ENCODE measurements at regions of chr12 and their contacts with region 1.

Region 1: GRCh38 chr12:40375076-40375475 is 150.3 kb downstream of the LRRK2 start:
- DNase-seq: no peak
- ATAC-seq: peak; percentile 91
- H3K4me3 ChIP-seq: no peak overlapping the region
- H3K27ac ChIP-seq: no peak overlapping the region
- H3K4me1 ChIP-seq: no peaks in the 10 kb centered on the region
- H3K27me3 ChIP-seq: no peaks in the 10 kb centered on the region
- CTCF ChIP-seq: peak; percentile 30 to 46 (median 45); a peak in 5 of 6 replicates
- EP300 ChIP-seq: no peak
- POLR2A ChIP-seq: no peak
- RAD21 ChIP-seq: no peak

Region 2: GRCh38 chr12:39736406-39736805 is 638.7 kb before region 1 on chr12:
- CTCF ChIA-PET with region 1: no interaction called
- POLR2A ChIA-PET with region 1: no interaction called
- RAD21 ChIA-PET with region 1: no interaction called
- SMC1A ChIA-PET with region 1: no interaction called
- in situ Hi-C with region 1: no loop called
- intact Hi-C with region 1: no loop called
- DNase-seq: no peak
- ATAC-seq: no peak
- H3K4me3 ChIP-seq: no peak overlapping the region
- H3K27ac ChIP-seq: no peak overlapping the region
- H3K4me1 ChIP-seq: no peaks in the 10 kb centered on the region
- H3K27me3 ChIP-seq: no peaks in the 10 kb centered on the region
- CTCF ChIP-seq: no peak
- EP300 ChIP-seq: no peak
- POLR2A ChIP-seq: no peak
- RAD21 ChIP-seq: no peak

Region 3: GRCh38 chr12:40152783-40153383 is 222.2 kb before region 1 on chr12:
- CTCF ChIA-PET with region 1: interaction called, 4 read pairs
- POLR2A ChIA-PET with region 1: no interaction called
- RAD21 ChIA-PET with region 1: interaction called, 4 read pairs
- SMC1A ChIA-PET with region 1: interaction called, 6 read pairs
- in situ Hi-C with region 1: no loop called
- intact Hi-C with region 1: loop called (anchors 5 kb)
- DNase-seq: no peak
- ATAC-seq: peak; percentile 78
- H3K4me3 ChIP-seq: no peak overlapping the region
- H3K27ac ChIP-seq: no peak overlapping the region
- H3K4me1 ChIP-seq: no peaks in the 10 kb centered on the region
- H3K27me3 ChIP-seq: no peaks in the 10 kb centered on the region
- CTCF ChIP-seq: peak; percentile 50 to 69 (median 66); a peak in 5 of 6 replicates
- EP300 ChIP-seq: no peak
- POLR2A ChIP-seq: no peak
- RAD21 ChIP-seq: peak; percentile 84

Region 4: GRCh38 chr12:40271981-40272664 is 103.0 kb before region 1 on chr12:
- CTCF ChIA-PET with region 1: no interaction called
- POLR2A ChIA-PET with region 1: no interaction called
- RAD21 ChIA-PET with region 1: no interaction called
- SMC1A ChIA-PET with region 1: no interaction called
- in situ Hi-C with region 1: no loop called
- intact Hi-C with region 1: no loop called
- DNase-seq: no peak
- ATAC-seq: no peak
- H3K4me3 ChIP-seq: no peak overlapping the region
- H3K27ac ChIP-seq: no peak overlapping the region
- H3K4me1 ChIP-seq: no peaks in the 10 kb centered on the region
- H3K27me3 ChIP-seq: no peaks in the 10 kb centered on the region
- CTCF ChIP-seq: no peak
- EP300 ChIP-seq: no peak
- POLR2A ChIP-seq: no peak
- RAD21 ChIP-seq: no peak

Region 5: DNA sequence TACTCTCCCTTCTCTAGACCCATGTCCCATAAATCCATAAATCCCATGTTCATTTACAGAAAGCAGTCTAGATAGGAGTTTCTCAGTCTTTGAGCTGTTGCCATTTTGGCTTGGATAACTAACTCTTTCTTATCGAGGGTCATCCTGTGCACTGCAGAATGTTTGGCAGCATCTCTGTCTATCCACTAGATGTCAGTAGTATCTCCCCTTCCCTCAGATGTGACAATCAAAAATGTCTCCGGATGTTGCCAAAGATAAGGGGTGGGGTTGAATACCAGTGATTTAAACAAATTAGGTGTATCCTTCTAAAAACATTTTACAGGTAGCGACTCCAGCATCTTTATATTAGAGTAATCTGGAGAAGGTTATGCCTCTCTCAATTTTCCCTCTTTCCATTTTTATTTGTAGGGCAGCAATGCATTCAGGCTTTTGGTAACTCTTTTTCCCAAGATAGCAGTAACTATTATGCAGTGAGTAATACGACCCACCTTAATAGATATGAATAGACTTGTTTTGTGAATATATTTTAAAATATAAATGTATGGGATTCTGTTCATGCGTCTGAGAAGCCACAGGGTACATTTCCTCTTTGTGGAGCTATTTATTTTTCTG is 49.6 kb before region 1 on chr12:
- CTCF ChIA-PET with region 1: interaction called, 11 read pairs
- POLR2A ChIA-PET with region 1: no interaction called
- RAD21 ChIA-PET with region 1: interaction called, 3 read pairs
- SMC1A ChIA-PET with region 1: interaction called, 3 read pairs
- in situ Hi-C with region 1: no loop called
- intact Hi-C with region 1: no loop called
- DNase-seq: no peak
- ATAC-seq: peak; percentile 98
- H3K4me3 ChIP-seq: no peak overlapping the region
- H3K27ac ChIP-seq: no peak overlapping the region
- H3K4me1 ChIP-seq: no peaks in the 10 kb centered on the region
- H3K27me3 ChIP-seq: no peaks in the 10 kb centered on the region
- CTCF ChIP-seq: peak; percentile 60 to 80 (median 78)
- EP300 ChIP-seq: no peak
- POLR2A ChIP-seq: no peak
- RAD21 ChIP-seq: peak; percentile 69

Region 6: DNA sequence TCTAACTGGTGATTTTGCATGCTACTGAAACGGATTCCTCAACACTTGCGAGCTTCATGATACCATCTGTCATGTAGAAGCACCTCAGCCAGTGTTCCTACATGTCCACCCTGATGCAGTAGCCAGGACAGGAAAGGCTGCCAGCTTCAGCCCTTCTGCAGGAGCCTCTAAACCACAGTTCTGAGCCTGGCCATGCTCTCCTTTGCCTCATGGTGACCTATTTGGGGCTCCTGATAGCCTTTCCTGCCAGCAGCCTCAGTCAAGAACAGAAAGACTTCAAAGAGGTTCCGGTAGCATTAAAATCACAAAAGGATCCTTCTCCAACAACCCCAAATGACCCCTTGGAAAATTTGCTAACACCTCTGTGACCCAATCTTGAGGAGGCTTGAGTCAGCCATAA is 413.2 kb after region 1 on chr12:
- CTCF ChIA-PET with region 1: no interaction called
- POLR2A ChIA-PET with region 1: no interaction called
- RAD21 ChIA-PET with region 1: no interaction called
- SMC1A ChIA-PET with region 1: no interaction called
- in situ Hi-C with region 1: no loop called
- intact Hi-C with region 1: no loop called
- DNase-seq: no peak
- ATAC-seq: no peak
- H3K4me3 ChIP-seq: no peak overlapping the region
- H3K27ac ChIP-seq: no peak overlapping the region
- H3K4me1 ChIP-seq: no peaks in the 10 kb centered on the region
- H3K27me3 ChIP-seq: no peaks in the 10 kb centered on the region
- CTCF ChIP-seq: no peak
- EP300 ChIP-seq: no peak
- POLR2A ChIP-seq: no peak
- RAD21 ChIP-seq: no peak

Region 7: DNA sequence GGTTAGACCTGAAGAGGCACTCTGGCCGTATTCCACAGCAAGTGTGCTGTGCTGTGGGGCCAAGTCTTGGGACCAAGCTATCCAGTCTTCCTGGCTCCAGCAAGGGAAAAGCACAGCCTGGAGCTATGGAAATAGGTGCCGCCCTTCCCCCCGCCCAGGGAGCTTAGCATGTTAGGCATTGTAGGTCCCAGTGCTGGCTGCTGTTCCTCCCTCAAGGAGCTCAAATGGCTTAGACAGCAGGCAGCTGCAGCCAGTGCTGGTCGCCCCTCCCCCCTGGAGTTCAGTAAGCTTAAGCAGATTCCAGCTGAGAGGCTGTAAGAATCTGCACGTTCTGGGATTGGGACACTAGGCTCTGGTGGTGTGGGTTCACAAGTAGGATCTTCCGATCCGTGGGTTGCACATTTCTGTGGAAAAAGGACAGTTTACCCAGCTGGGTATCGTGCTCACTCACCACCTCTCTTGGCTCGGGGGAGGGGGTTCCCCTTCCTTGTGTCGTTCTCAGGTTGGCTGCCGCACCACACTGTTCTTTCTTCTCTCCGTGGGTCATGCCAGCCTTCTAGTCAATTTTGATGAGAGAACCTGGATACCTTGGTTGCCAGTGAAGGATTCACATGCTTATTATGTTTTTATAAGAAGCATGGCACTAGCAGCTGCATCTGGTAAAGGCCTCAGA is 444.5 kb after region 1 on chr12:
- CTCF ChIA-PET with region 1: no interaction called
- POLR2A ChIA-PET with region 1: no interaction called
- RAD21 ChIA-PET with region 1: no interaction called
- SMC1A ChIA-PET with region 1: no interaction called
- in situ Hi-C with region 1: no loop called
- intact Hi-C with region 1: no loop called
- DNase-seq: no peak
- ATAC-seq: no peak
- H3K4me3 ChIP-seq: no peak overlapping the region
- H3K27ac ChIP-seq: no peak overlapping the region
- H3K4me1 ChIP-seq: no peaks in the 10 kb centered on the region
- H3K27me3 ChIP-seq: no peaks in the 10 kb centered on the region
- CTCF ChIP-seq: no peak
- EP300 ChIP-seq: no peak
- POLR2A ChIP-seq: no peak
- RAD21 ChIP-seq: no peak